AG04449 (cell line): ENCODE measurements at regions of chr10 and their contacts with region 1.

Region 1: GRCh38 chr10:119750391-119751230 is 24.8 kb downstream of the INPP5F start:
- DNase-seq: peak; percentile 36
- H3K4me3 ChIP-seq: no peak overlapping the region
- CTCF ChIP-seq: peak; percentile 90

Region 2: GRCh38 chr10:119686439-119687191 is 64.0 kb before region 1 on chr10:
- CTCF ChIA-PET with region 1: interaction called, 11 read pairs
- POLR2A ChIA-PET with region 1: no interaction called
- DNase-seq: peak; percentile 34
- H3K4me3 ChIP-seq: peak overlapping the region; percentile 44
- CTCF ChIP-seq: peak; percentile 90

Region 3: DNA sequence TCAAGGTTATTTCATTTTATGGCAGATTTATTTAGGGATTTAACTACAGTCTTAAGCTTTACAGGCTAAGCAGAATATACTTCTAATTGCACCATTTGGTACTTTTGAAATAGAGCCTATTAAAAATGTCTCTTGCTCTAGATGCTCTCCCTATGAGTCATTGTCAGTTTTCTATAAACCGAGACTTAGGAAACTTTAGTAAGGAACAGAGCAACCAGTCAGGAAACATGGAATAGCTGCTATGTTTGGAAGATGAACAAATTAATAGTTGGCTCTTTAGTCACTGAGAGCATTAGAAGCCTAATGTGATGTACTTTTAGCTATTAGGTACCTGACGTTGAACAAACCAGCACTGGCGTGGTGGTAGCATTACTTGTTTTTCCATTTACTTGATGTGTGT is 10.5 kb after region 1 on chr10:
- CTCF ChIA-PET with region 1: interaction called, 81 read pairs
- POLR2A ChIA-PET with region 1: no interaction called
- DNase-seq: peak; percentile 74
- H3K4me3 ChIP-seq: no peak overlapping the region
- CTCF ChIP-seq: no peak

Region 4: DNA sequence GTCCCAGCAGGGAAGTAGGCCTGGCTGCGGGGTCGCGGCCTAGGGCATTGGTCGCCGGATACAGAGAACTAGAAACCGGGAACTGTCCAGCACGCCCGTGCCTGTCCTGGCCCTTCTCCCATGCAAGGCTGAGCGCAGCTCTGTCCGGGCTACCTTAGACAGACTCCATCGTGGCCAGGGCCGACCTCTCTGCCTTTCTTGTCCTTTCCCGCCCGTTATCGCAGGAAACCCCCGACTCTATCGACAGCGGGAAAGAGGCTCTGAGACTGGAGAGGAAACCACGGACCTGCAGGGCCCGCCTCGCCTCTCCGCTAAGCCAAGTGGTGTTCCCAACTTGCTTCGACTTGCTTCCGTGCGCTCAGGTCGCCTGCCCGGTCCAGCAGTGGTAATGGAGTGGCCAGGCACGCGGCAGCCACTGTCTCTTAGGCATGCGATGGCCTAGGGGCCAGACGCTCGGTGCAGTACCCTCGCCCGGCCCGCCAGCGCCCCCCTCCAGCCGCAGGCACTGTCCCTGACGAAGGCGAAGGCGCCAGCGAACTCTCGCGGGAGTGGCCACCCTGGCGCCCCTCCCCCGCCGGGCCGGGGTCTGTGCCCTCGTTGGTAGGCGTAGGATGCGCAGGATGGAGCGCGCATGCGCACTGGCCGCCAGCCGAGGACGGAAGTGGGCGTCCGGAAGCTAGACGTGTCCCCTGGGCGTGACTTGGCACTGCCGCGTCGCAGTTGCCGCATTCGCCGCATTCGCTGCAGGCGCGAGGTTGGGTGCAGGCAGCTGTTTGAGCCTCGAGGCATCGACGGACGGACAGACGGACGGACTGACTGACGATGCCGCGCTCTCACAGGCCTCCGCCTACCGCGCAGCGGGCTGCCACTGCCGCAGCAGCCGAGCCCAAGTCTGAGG is 67.6 kb after region 1 on chr10:
- CTCF ChIA-PET with region 1: interaction called, 13 read pairs
- POLR2A ChIA-PET with region 1: no interaction called
- DNase-seq: no peak
- H3K4me3 ChIP-seq: peak overlapping the region; percentile 59
- CTCF ChIP-seq: peak; percentile 19

Region 5: GRCh38 chr10:119872860-119873681 is 122.5 kb after region 1 on chr10:
- CTCF ChIA-PET with region 1: interaction called, 664 read pairs
- POLR2A ChIA-PET with region 1: no interaction called
- DNase-seq: no peak
- H3K4me3 ChIP-seq: peak overlapping the region; percentile 76
- CTCF ChIP-seq: no peak

Region 6: GRCh38 chr10:119919826-119920225 is 169.2 kb after region 1 on chr10:
- CTCF ChIA-PET with region 1: interaction called, 34 read pairs
- POLR2A ChIA-PET with region 1: no interaction called
- DNase-seq: no peak
- H3K4me3 ChIP-seq: no peak overlapping the region
- CTCF ChIP-seq: no peak